CD14-positive monocyte (primary cell): ENCODE measurements at regions of chr5 and their contacts with region 1.

Region 1: DNA sequence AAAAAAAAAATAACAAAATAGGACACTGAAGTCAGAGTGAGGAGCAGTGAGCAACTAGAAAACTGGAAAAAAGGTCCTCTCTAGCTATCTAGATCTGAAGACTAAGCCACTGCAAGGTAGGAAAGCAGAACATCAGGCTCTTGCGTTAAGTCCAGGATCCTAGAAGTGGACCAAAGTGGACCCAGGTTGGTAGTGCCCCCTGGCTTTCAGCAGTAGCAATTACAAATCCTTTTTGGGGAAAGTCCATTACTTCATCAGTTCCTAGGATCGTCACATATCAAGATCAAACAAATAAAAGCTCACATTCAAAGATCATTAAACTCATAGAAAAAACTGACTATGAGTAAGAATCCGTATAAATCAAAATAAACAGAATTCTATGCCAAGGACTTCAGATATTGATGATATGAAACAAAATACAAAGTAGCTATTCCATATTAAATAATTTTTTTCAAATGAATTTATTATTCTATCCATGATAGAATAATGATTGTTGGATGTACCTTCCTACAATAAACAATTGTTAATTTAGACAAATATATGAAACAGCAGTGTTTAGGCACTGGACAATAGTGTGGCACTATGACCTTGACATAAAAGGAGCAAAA is 6.5 kb upstream of the RICTOR start:
- DNase-seq: peak; percentile 79 to 92 (median 85)
- H3K4me3 ChIP-seq: no peak overlapping the region
- H3K4me3 Mint-ChIP-seq: no peak overlapping the region
- H3K27ac ChIP-seq: no peak overlapping the region
- H3K27ac Mint-ChIP-seq: peak overlapping the region in 1 of 7 donors; percentile 53
- H3K4me1 ChIP-seq: peaks cover 13 to 19% of the 10 kb centered on the region in 2 donors
- H3K4me1 Mint-ChIP-seq: peaks cover 20% of the 10 kb centered on the region
- H3K27me3 ChIP-seq: no peaks in the 10 kb centered on the region
- H3K27me3 Mint-ChIP-seq: peaks cover 0 to 1% (median 1%) of the 10 kb centered on the region in 3 donors
- CTCF ChIP-seq: peak; percentile 90

Region 2: DNA sequence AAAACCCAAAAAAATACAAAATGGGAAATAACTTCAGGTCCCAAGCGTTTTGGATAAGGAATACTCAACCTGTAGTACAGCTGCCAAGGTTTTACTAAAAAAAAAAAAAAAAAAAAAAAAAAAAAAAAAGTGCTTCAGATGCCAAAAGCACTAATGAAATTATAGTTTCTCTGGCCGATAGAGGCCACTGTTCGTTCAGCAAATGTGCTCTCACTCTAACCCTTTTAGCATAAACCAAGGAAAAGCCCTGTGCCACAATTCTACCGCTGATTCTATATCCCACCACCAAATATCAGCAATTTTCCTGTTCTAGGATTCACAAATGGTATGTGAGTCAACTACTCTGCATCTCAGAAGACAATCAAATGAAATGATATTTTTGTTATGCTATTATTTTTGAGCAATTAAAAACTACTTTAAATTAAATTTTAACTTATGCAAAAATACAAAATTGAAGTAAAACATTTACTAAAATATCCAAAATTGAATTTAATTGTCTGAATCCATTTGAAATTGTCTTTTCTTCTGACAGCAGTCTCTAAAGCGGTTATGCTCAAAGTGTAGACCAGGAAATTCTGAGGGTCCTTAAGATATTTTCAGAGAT is 86.3 kb before region 1 on chr5:
- intact Hi-C with region 1: loop called in 1 of 2 experiments (anchors 10 kb)
- DNase-seq: peak; percentile 6 to 40 (median 37)
- H3K4me3 ChIP-seq: no peak overlapping the region
- H3K4me3 Mint-ChIP-seq: no peak overlapping the region
- H3K27ac ChIP-seq: no peak overlapping the region
- H3K27ac Mint-ChIP-seq: no peak overlapping the region
- H3K4me1 ChIP-seq: no peaks in the 10 kb centered on the region
- H3K4me1 Mint-ChIP-seq: no peaks in the 10 kb centered on the region
- H3K27me3 ChIP-seq: no peaks in the 10 kb centered on the region
- H3K27me3 Mint-ChIP-seq: no peaks in the 10 kb centered on the region
- CTCF ChIP-seq: peak; percentile 61